Activated B cell treated with CpG ODN at 0.5 μM for 24 hours (primary cell): ENCODE measurements at regions of chr5 and their contacts with region 1.

Region 1: DNA sequence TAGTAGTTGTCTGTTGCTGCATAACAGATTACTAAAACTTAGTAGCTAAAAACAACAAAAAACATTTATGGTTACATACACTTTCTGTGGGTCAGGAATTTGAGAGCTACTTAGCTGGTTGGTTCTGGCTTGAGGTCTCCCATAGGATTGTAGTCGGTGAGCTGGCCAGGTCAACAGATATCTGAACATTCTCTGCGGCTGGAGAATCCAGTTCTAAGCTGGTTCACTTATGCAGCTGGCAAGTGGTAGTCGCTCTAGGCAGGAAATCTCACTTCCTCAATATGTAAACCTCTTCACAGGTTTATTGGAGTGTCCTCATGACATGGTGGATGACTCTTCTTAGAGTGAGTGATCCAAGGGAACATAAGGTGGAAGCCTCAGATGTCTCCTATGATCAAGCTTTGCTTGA is 65.7 kb upstream of the TNFAIP8 start:
- DNase-seq: no peak
- ATAC-seq: peak; percentile 93
- H3K4me3 Mint-ChIP-seq: peak overlapping the region; percentile 75
- H3K27ac Mint-ChIP-seq: peak overlapping the region; percentile 89
- H3K4me1 Mint-ChIP-seq: peaks cover 85% of the 10 kb centered on the region
- H3K27me3 Mint-ChIP-seq: no peaks in the 10 kb centered on the region
- CTCF ChIP-seq: no peak

Region 2: DNA sequence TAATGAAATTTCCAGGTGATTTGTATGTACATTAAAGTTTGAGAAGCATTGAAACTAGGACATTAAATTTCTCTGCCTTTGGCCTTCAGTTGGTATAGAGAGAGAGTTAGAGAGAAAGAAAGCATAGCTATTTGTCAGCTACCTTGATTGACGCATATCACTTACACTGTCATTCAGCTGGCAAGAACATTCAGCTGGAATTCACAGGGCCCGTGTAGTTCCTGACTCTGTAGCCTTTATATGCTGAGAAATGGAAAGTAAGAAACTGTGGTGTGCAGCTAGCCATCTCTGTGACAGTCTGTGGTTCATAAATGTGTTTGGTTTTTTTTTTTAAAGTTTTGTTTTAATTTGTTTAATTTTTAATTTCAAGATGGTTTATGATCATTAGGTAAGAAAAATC is 160.4 kb before region 1 on chr5:
- CTCF ChIA-PET with region 1: no interaction called
- POLR2A ChIA-PET with region 1: interaction called, 11 read pairs
- intact Hi-C with region 1: no loop called
- DNase-seq: no peak
- ATAC-seq: no peak
- H3K4me3 Mint-ChIP-seq: no peak overlapping the region
- H3K27ac Mint-ChIP-seq: no peak overlapping the region
- H3K4me1 Mint-ChIP-seq: no peaks in the 10 kb centered on the region
- H3K27me3 Mint-ChIP-seq: no peaks in the 10 kb centered on the region
- CTCF ChIP-seq: no peak

Region 3: GRCh38 chr5:119267958-119268386 is 22.2 kb before region 1 on chr5:
- CTCF ChIA-PET with region 1: no interaction called
- POLR2A ChIA-PET with region 1: interaction called, 54 read pairs
- intact Hi-C with region 1: no loop called
- DNase-seq: peak; percentile 62
- ATAC-seq: peak; percentile 65
- H3K4me3 Mint-ChIP-seq: peak overlapping the region; percentile 95
- H3K27ac Mint-ChIP-seq: peak overlapping the region; percentile 95
- H3K4me1 Mint-ChIP-seq: peaks cover 50% of the 10 kb centered on the region
- H3K27me3 Mint-ChIP-seq: no peaks in the 10 kb centered on the region
- CTCF ChIP-seq: no peak

Region 4: DNA sequence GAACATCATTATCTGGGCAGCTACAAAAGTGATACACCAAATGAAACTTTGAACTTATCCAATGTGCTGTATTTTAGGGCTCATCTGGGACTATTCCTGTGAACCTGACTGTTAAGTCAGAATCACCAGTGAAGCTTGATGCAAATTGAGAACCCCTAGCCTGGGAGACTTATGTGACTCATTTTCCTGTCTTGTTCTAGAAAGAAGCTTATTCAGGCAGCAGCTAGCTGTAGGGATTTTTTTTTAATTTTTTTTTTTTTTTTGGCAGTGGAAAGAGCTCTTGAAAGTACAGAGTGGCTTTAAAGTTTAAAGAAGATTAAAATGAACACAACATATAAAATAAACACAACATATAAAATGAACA is 15.4 kb before region 1 on chr5:
- CTCF ChIA-PET with region 1: interaction called, 3 read pairs
- POLR2A ChIA-PET with region 1: interaction called, 54 read pairs
- intact Hi-C with region 1: loop called (anchors 1 kb)
- DNase-seq: no peak
- ATAC-seq: peak; percentile 42
- H3K4me3 Mint-ChIP-seq: peak overlapping the region; percentile 78
- H3K27ac Mint-ChIP-seq: peak overlapping the region; percentile 89
- H3K4me1 Mint-ChIP-seq: peaks cover 97% of the 10 kb centered on the region
- H3K27me3 Mint-ChIP-seq: no peaks in the 10 kb centered on the region
- CTCF ChIP-seq: no peak

Region 5: GRCh38 chr5:119302916-119303897 is 13.0 kb after region 1 on chr5:
- CTCF ChIA-PET with region 1: interaction called, 5 read pairs
- POLR2A ChIA-PET with region 1: interaction called, 10 read pairs
- intact Hi-C with region 1: no loop called
- DNase-seq: no peak
- ATAC-seq: no peak
- H3K4me3 Mint-ChIP-seq: peak overlapping the region; percentile 16
- H3K27ac Mint-ChIP-seq: peak overlapping the region; percentile 86
- H3K4me1 Mint-ChIP-seq: peaks cover 95% of the 10 kb centered on the region
- H3K27me3 Mint-ChIP-seq: no peaks in the 10 kb centered on the region
- CTCF ChIP-seq: no peak

Region 6: DNA sequence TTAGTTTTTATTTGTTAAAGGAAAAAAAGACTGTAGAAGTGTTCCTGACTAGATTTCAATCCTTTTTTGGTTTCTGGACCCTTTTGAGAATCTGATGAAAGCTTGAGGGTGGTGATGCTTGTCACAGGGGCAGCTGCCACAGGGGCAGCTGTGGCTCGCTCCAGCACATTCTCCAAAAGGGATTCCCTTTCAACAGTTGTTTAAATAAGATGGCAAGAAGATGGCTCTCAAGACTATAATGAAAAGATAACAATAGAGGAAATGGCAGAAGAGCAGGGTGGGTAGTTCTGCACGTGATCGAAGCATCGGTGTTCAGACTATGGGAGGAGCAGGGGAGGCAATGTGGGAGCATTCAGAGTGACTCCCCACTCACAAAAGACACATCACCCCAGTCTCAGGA is 19.2 kb after region 1 on chr5:
- CTCF ChIA-PET with region 1: interaction called, 3 read pairs
- POLR2A ChIA-PET with region 1: interaction called, 9 read pairs
- intact Hi-C with region 1: loop called (anchors 1 kb)
- DNase-seq: no peak
- ATAC-seq: no peak
- H3K4me3 Mint-ChIP-seq: peak overlapping the region; percentile 73
- H3K27ac Mint-ChIP-seq: peak overlapping the region; percentile 92
- H3K4me1 Mint-ChIP-seq: peaks cover 94% of the 10 kb centered on the region
- H3K27me3 Mint-ChIP-seq: no peaks in the 10 kb centered on the region
- CTCF ChIP-seq: no peak

Region 7: DNA sequence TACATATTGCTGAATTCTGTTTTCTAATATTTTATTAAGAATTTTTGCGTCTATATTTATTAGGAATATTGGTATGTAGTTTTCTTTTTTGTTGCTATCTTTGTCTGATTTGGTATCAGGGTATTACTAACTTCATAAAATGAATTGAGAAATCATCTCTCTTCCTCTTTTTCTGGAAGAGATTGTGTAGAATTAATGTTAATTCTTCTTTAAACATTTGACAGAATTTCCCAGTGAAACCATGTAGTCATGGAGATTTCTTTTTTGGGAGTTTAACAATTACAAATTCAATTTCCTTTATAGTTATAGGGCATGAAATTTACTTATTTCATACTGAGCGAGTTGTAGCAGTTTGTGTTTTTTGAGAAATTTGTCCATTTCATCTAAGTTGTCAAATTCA is 335.9 kb after region 1 on chr5:
- CTCF ChIA-PET with region 1: no interaction called
- POLR2A ChIA-PET with region 1: no interaction called
- intact Hi-C with region 1: no loop called
- DNase-seq: no peak
- ATAC-seq: no peak
- H3K4me3 Mint-ChIP-seq: no peak overlapping the region
- H3K27ac Mint-ChIP-seq: no peak overlapping the region
- H3K4me1 Mint-ChIP-seq: no peaks in the 10 kb centered on the region
- H3K27me3 Mint-ChIP-seq: peaks cover 31% of the 10 kb centered on the region
- CTCF ChIP-seq: no peak